CD14-positive monocyte (primary cell): ENCODE measurements at regions of chr6 and their contacts with region 1.

Region 1: GRCh38 chr6:113632220-113632864 is 224.8 kb upstream of the MARCKS start:
- DNase-seq: peak; percentile 92 to 96 (median 94)
- H3K4me3 ChIP-seq: peak overlapping the region in 1 of 3 experiments; percentile 46
- H3K4me3 Mint-ChIP-seq: peak overlapping the region; percentile 60 to 78
- H3K27ac ChIP-seq: peak overlapping the region; percentile 93 to 100
- H3K27ac Mint-ChIP-seq: peak overlapping the region; percentile 100
- H3K4me1 ChIP-seq: peaks cover 63 to 72% of the 10 kb centered on the region in 2 donors
- H3K4me1 Mint-ChIP-seq: peaks cover 58% of the 10 kb centered on the region
- H3K27me3 ChIP-seq: no peaks in the 10 kb centered on the region
- H3K27me3 Mint-ChIP-seq: peaks cover 0 to 6% (median 0%) of the 10 kb centered on the region in 3 donors
- CTCF ChIP-seq: no peak

Region 2: DNA sequence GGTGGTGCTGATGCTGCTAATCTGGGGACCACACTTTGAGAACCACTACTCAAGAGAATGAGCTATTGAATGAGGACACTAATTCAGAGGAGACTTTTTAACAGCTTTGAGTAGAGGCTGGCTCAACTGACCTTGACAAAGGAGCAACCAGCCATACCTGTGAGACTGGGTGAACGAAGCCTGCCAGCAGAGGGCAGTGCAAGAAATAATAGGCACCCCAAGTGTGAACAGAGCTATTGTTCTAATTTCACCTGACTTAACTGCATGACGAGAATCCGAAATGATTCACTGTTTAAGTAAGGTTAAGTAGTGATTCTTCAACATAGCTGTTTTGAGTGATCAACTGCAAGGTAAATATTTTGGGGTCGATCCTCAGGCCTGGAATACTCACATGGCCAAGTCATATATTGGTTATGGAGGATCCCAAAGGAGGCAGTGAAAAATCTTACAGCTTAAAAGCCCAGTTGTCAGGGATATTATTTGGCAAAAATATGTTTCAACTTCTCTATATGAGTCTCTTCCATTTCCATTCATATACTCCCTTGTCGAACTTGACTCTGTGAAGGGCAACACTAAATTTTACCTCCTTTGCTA is 325.7 kb before region 1 on chr6:
- intact Hi-C with region 1: loop called in 1 of 2 experiments (anchors 5 kb)
- DNase-seq: peak; percentile 42 to 63 (median 44)
- H3K4me3 ChIP-seq: no peak overlapping the region
- H3K4me3 Mint-ChIP-seq: no peak overlapping the region
- H3K27ac ChIP-seq: no peak overlapping the region
- H3K27ac Mint-ChIP-seq: no peak overlapping the region
- H3K4me1 ChIP-seq: no peaks in the 10 kb centered on the region
- H3K4me1 Mint-ChIP-seq: no peaks in the 10 kb centered on the region
- H3K27me3 ChIP-seq: no peaks in the 10 kb centered on the region
- H3K27me3 Mint-ChIP-seq: peaks cover 0 to 6% (median 0%) of the 10 kb centered on the region in 3 donors
- CTCF ChIP-seq: peak; percentile 68

Region 3: DNA sequence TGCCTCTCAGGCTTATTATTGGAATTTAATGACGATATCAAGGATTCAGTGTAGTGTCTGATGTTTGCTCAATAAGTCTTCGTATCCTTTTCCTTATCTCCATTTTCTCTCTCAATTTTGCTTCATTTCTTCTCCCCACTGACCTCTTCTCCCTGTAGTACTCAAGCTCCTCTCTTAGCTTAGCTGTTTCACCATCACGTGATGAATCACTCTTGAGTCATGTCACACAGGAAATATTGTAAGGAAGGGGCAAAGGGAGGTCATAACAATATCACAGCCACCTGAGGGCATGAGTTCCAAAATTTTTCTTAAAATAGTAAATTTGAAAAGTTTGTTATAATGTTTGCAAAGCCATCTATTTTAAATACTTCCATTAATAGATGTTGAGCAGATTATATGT is 167.4 kb before region 1 on chr6:
- intact Hi-C with region 1: loop called in 1 of 2 experiments (anchors 10 kb)
- DNase-seq: peak; percentile 81 to 93 (median 88)
- H3K4me3 ChIP-seq: peak overlapping the region in 1 of 3 experiments; percentile 5
- H3K4me3 Mint-ChIP-seq: peak overlapping the region in 1 of 2 donors; percentile 46
- H3K27ac ChIP-seq: peak overlapping the region; percentile 48 to 74
- H3K27ac Mint-ChIP-seq: peak overlapping the region; percentile 18 to 88 (median 78)
- H3K4me1 ChIP-seq: peaks cover 33 to 37% of the 10 kb centered on the region in 2 donors
- H3K4me1 Mint-ChIP-seq: peaks cover 29% of the 10 kb centered on the region
- H3K27me3 ChIP-seq: no peaks in the 10 kb centered on the region
- H3K27me3 Mint-ChIP-seq: peaks cover 0 to 4% (median 2%) of the 10 kb centered on the region in 3 donors
- CTCF ChIP-seq: no peak

Region 4: GRCh38 chr6:113697632-113698410 is 65.5 kb after region 1 on chr6:
- intact Hi-C with region 1: loop called (anchors 2 kb)
- DNase-seq: peak; percentile 54 to 81 (median 77)
- H3K4me3 ChIP-seq: peak overlapping the region in 1 of 3 experiments; percentile 14
- H3K4me3 Mint-ChIP-seq: no peak overlapping the region
- H3K27ac ChIP-seq: peak overlapping the region in 1 of 2 donors; percentile 85
- H3K27ac Mint-ChIP-seq: peak overlapping the region; percentile 89 to 98 (median 92)
- H3K4me1 ChIP-seq: peaks cover 32 to 38% of the 10 kb centered on the region in 2 donors
- H3K4me1 Mint-ChIP-seq: peaks cover 34% of the 10 kb centered on the region
- H3K27me3 ChIP-seq: no peaks in the 10 kb centered on the region
- H3K27me3 Mint-ChIP-seq: no peaks in the 10 kb centered on the region
- CTCF ChIP-seq: no peak

Region 5: GRCh38 chr6:113763883-113764282 is 131.5 kb after region 1 on chr6:
- intact Hi-C with region 1: loop called in 1 of 2 experiments (anchors 5 kb)
- DNase-seq: peak; percentile 82 to 98 (median 95)
- H3K4me3 ChIP-seq: peak overlapping the region in 1 of 3 experiments; percentile 36
- H3K4me3 Mint-ChIP-seq: peak overlapping the region in 1 of 2 donors; percentile 73
- H3K27ac ChIP-seq: peak overlapping the region; percentile 55 to 93
- H3K27ac Mint-ChIP-seq: peak overlapping the region; percentile 92 to 98 (median 97)
- H3K4me1 ChIP-seq: peaks cover 29 to 32% of the 10 kb centered on the region in 2 donors
- H3K4me1 Mint-ChIP-seq: peaks cover 26% of the 10 kb centered on the region
- H3K27me3 ChIP-seq: no peaks in the 10 kb centered on the region
- H3K27me3 Mint-ChIP-seq: no peaks in the 10 kb centered on the region
- CTCF ChIP-seq: no peak

Region 6: GRCh38 chr6:113920663-113921267 is 288.4 kb after region 1 on chr6:
- intact Hi-C with region 1: no loop called
- DNase-seq: no peak
- H3K4me3 ChIP-seq: no peak overlapping the region
- H3K4me3 Mint-ChIP-seq: no peak overlapping the region
- H3K27ac ChIP-seq: no peak overlapping the region
- H3K27ac Mint-ChIP-seq: peak overlapping the region in 2 of 7 donors; percentile 13
- H3K4me1 ChIP-seq: no peaks in the 10 kb centered on the region
- H3K4me1 Mint-ChIP-seq: peaks cover 5% of the 10 kb centered on the region
- H3K27me3 ChIP-seq: no peaks in the 10 kb centered on the region
- H3K27me3 Mint-ChIP-seq: no peaks in the 10 kb centered on the region
- CTCF ChIP-seq: no peak